ENCODE measurements at regions of chr7 and their contacts with region 1.

Region 1: GRCh38 chr7:78383096-78383880 is 584.7 kb downstream of the PHTF2 start:
- DNase-seq: no peak
- H3K4me3 ChIP-seq: no peak overlapping the region
- H3K27ac ChIP-seq: no peak overlapping the region
- H3K4me1 ChIP-seq: no peaks in the 10 kb centered on the region
- H3K27me3 ChIP-seq: peaks cover 23% of the 10 kb centered on the region
- CTCF ChIP-seq: no peak

Region 2: GRCh38 chr7:78326876-78327275 is 56.4 kb before region 1 on chr7:
- CTCF ChIA-PET with region 1: no interaction called
- POLR2A ChIA-PET with region 1: no interaction called
- intact Hi-C with region 1: loop called (anchors 10 kb)
- DNase-seq: no peak
- H3K4me3 ChIP-seq: no peak overlapping the region
- H3K27ac ChIP-seq: no peak overlapping the region
- H3K4me1 ChIP-seq: no peaks in the 10 kb centered on the region
- H3K27me3 ChIP-seq: peaks cover 4% of the 10 kb centered on the region
- CTCF ChIP-seq: no peak